Calu3 (cell line): ENCODE measurements at regions of chr10 and their contacts with region 1.

Region 1: GRCh38 chr10:72048450-72049124 is 39.8 kb downstream of the SPOCK2 start:
- DNase-seq: peak; percentile 95
- H3K4me3 Mint-ChIP-seq: no peak overlapping the region
- H3K27ac Mint-ChIP-seq: peak overlapping the region; percentile 13
- H3K4me1 Mint-ChIP-seq: no peaks in the 10 kb centered on the region
- H3K27me3 Mint-ChIP-seq: no peaks in the 10 kb centered on the region
- CTCF ChIP-seq: peak; percentile 97

Region 2: DNA sequence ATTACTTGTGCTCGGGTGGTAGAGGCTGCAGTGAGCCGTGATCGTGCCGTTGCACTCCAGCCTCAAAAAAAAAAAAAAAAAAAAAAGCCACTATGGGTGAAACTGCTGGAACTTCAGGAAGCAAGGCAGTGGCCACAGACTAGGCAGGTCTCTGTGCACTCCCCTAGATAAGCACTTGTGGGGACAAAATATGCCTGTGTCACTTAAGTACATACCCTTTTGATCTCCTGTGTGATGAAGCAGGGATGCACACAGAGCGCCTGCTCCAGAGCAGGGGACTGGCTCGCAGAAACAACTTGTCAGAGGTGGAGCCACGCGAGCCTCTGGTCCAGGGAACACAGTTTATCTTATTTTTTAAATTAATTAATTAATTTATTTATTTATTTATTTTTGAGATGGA is 154.7 kb before region 1 on chr10:
- CTCF ChIA-PET with region 1: interaction called, 82 read pairs
- intact Hi-C with region 1: loop called (anchors 1 kb)
- DNase-seq: no peak
- H3K4me3 Mint-ChIP-seq: no peak overlapping the region
- H3K27ac Mint-ChIP-seq: no peak overlapping the region
- H3K4me1 Mint-ChIP-seq: peaks cover 16% of the 10 kb centered on the region
- H3K27me3 Mint-ChIP-seq: no peaks in the 10 kb centered on the region
- CTCF ChIP-seq: no peak

Region 3: GRCh38 chr10:71957546-71958275 is 90.9 kb before region 1 on chr10:
- CTCF ChIA-PET with region 1: interaction called, 29 read pairs
- intact Hi-C with region 1: loop called (anchors 1 kb)
- DNase-seq: no peak
- H3K4me3 Mint-ChIP-seq: no peak overlapping the region
- H3K27ac Mint-ChIP-seq: no peak overlapping the region
- H3K4me1 Mint-ChIP-seq: peaks cover 14% of the 10 kb centered on the region
- H3K27me3 Mint-ChIP-seq: peaks cover 16% of the 10 kb centered on the region
- CTCF ChIP-seq: no peak

Region 4: DNA sequence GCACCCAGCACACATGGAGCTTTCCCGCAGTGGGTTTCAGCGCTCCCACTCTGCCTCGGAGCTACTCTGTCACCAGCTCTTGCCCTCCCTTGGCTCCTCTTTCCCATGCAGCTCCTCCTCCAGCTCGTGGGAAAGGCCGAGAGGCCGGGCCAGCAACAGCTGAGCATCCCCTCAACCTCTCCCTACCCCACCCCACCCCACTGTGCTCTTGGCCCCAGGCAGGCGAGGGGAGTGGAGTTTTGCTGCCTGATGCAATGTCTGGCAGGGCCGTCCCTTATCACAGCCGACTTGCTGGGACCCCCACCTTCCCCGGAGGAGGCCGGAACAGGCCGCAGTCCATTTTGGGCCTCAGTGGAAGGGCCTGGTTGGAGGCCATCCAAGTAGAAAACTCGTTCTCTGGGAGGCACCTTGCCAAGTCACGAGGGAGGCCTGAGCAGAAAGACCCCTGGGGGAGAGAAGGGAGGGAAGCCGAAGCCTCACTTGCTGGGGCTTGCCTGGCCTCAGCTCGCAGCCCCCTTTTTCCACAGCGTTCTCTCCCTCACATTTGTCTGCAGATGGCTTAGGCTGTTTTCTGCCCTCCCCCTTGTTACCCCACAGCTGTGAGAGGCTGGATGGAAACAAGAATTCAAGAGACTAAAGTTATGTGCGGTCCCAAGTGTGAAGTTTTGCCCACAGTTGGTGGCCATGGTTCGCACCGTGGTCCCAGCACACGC is 49.1 kb before region 1 on chr10:
- CTCF ChIA-PET with region 1: interaction called, 10 read pairs
- intact Hi-C with region 1: no loop called
- DNase-seq: no peak
- H3K4me3 Mint-ChIP-seq: peak overlapping the region; percentile 31
- H3K27ac Mint-ChIP-seq: peak overlapping the region; percentile 53
- H3K4me1 Mint-ChIP-seq: peaks cover 52% of the 10 kb centered on the region
- H3K27me3 Mint-ChIP-seq: no peaks in the 10 kb centered on the region
- CTCF ChIP-seq: no peak

Region 5: DNA sequence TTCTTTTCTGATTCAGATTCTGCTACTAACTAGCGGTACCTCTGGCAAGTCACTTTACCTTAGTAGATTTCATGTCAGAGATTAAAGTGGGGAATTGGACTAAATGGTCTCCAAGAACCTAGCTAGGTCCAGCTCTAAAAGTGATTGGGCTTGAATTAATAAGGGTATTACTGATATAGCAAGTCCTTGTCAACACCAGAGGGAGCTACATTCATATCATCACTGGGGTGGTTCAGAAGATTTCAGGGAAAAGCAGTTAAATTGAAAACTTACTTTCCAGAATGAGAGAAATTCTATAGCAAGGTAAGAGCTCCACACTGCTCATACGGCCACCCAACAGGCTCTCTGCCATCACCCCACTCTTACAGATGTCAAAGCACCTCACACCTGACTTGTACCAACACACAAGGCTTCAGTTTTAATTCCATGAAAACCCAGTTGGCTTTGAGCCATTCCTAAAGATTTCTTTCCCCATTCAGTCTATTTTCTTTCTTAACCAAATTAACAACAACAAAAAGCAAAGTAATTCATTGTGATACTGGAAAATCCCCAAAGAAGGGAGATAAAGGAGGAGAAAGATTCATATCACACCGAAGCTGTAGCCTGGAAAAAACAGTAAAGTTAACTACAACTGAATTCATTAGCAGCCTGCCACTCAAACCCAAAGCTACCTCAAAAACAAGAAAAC is 77.7 kb after region 1 on chr10:
- CTCF ChIA-PET with region 1: interaction called, 11 read pairs
- intact Hi-C with region 1: loop called (anchors 1 kb)
- DNase-seq: peak; percentile 24
- H3K4me3 Mint-ChIP-seq: no peak overlapping the region
- H3K27ac Mint-ChIP-seq: no peak overlapping the region
- H3K4me1 Mint-ChIP-seq: peaks cover 32% of the 10 kb centered on the region
- H3K27me3 Mint-ChIP-seq: no peaks in the 10 kb centered on the region
- CTCF ChIP-seq: no peak

Region 6: DNA sequence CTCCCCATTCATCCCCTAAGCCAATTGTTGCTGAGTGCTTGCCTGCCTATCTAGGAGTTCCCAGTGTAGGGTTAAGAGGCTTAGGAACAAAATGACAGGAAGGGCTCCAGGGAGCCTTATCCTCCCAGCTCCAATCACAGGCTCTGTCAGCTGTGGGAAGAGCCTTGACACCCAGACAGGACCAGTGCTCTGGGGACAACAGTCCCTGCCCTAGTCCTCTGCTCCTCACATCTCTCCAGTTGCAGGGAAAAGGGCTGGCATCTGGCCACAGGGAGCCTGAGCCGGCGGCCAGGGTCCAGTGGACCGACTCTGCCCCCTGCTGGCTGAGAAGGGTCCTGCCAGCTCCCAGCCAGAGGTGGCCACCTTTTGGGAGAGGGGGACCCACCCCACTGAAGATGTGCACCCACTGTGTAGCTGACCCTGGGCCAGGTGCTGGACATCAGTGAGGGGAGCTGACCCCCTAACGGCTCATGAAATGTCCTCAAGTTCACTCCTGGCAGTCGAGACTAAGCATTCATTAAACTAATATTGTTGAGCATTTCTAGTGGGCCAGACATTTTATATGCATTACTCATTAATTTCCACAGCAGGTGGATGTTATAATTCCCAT is 288.5 kb after region 1 on chr10:
- CTCF ChIA-PET with region 1: interaction called, 12 read pairs
- intact Hi-C with region 1: loop called (anchors 2 kb)
- DNase-seq: peak; percentile 92
- H3K4me3 Mint-ChIP-seq: no peak overlapping the region
- H3K27ac Mint-ChIP-seq: no peak overlapping the region
- H3K4me1 Mint-ChIP-seq: peaks cover 64% of the 10 kb centered on the region
- H3K27me3 Mint-ChIP-seq: no peaks in the 10 kb centered on the region
- CTCF ChIP-seq: peak; percentile 97

Region 7: GRCh38 chr10:72503241-72503640 is 454.7 kb after region 1 on chr10:
- CTCF ChIA-PET with region 1: no interaction called
- intact Hi-C with region 1: no loop called
- DNase-seq: no peak
- H3K4me3 Mint-ChIP-seq: no peak overlapping the region
- H3K27ac Mint-ChIP-seq: no peak overlapping the region
- H3K4me1 Mint-ChIP-seq: no peaks in the 10 kb centered on the region
- H3K27me3 Mint-ChIP-seq: no peaks in the 10 kb centered on the region
- CTCF ChIP-seq: no peak